Activated naive CD4-positive, alpha-beta T cell treated with anti-CD3 and anti-CD28 coated beads for 36 hours (primary cell): ENCODE measurements at regions of chr2 and their contacts with region 1.

Region 1: GRCh38 chr2:164032995-164033394 is 297.2 kb upstream of the FIGN start:
- DNase-seq: no peak
- H3K4me3 Mint-ChIP-seq: no peak overlapping the region
- H3K27ac Mint-ChIP-seq: no peak overlapping the region
- H3K4me1 Mint-ChIP-seq: no peaks in the 10 kb centered on the region
- H3K27me3 Mint-ChIP-seq: no peaks in the 10 kb centered on the region

Region 2: DNA sequence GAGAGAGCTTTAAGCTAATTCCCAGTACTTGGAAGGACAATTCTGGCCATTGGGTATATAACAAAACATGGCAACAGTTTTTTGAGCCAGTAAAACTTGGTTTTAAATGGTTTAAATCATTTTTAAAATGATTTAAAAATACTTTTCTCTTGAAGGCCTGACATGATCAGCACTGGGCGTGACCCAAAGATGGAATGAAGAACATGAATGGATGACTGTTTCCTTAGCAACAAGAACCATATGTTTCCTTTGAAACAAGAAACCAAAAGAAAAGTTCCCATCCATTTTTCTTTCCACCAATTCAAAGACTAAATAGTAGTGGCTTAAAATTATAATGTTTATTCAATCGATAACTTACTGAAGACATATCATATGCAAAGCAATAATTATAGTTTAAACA is 51.1 kb after region 1 on chr2:
- CTCF ChIA-PET with region 1: no interaction called
- intact Hi-C with region 1: loop called (anchors 5 kb)
- DNase-seq: no peak
- H3K4me3 Mint-ChIP-seq: no peak overlapping the region
- H3K27ac Mint-ChIP-seq: no peak overlapping the region
- H3K4me1 Mint-ChIP-seq: no peaks in the 10 kb centered on the region
- H3K27me3 Mint-ChIP-seq: no peaks in the 10 kb centered on the region

Region 3: GRCh38 chr2:165149439-165149838 is 1116.4 kb after region 1 on chr2:
- CTCF ChIA-PET with region 1: no interaction called
- intact Hi-C with region 1: no loop called
- DNase-seq: no peak
- H3K4me3 Mint-ChIP-seq: no peak overlapping the region
- H3K27ac Mint-ChIP-seq: no peak overlapping the region
- H3K4me1 Mint-ChIP-seq: no peaks in the 10 kb centered on the region
- H3K27me3 Mint-ChIP-seq: peaks cover 2% of the 10 kb centered on the region